Sigmoid colon (tissue), 7 donors: ENCODE measurements at regions of chr1 and their contacts with region 1.

Region 1: DNA sequence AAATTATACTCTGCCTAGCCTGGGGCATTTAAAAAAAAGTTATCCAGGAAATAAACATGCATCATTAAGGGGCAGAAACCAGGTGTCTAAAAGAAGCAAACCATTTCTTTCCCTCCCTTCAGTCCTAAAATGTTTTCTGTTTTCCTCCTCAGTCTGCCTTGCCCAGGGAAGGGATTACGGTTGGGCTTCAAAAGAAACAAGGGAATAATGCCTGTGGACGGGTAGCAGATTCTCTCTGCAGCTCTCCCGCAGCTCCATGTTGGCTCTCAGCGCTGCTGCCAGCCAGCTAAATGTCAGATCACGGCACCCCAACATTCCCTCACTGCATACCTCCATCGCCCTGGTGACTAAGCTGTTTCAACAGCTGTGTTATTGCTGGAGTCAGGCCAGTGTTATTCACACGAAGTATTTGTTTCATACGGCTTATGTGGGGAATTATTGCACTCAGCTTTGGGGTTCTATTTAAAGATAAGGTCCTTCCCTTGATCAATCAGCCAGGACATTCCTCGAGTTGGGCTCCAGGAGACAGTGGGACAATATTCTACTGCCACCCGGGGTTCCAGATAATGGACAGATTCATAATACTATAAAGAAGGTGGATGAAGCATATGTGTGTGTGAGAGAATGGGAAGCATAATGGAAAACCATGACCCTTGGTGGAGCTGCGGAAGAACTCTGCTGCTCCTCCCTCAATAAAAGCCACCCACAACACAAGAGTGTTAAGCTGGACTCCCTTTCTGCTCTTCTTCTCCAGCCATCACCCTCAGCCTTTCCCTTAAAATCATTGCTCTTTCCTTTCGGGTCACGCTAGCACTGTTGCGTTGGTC is 58.2 kb downstream of the WLS start:
- DNase-seq: peak; percentile 86
- H3K4me3 ChIP-seq: peak overlapping the region in 3 of 4 donors; percentile 1 to 18 (median 13)
- H3K27ac ChIP-seq: peak overlapping the region; percentile 71 to 86 (median 80)
- H3K4me1 ChIP-seq: peaks cover 0 to 67% (median 60%) of the 10 kb centered on the region in 4 donors
- H3K27me3 ChIP-seq: no peaks in the 10 kb centered on the region
- CTCF ChIP-seq: no peak
- EP300 ChIP-seq: no peak
- POLR2A ChIP-seq: no peak

Region 2: GRCh38 chr1:68149110-68149798 is 24.9 kb before region 1 on chr1:
- intact Hi-C with region 1: no loop called
- DNase-seq: no peak
- H3K4me3 ChIP-seq: no peak overlapping the region
- H3K27ac ChIP-seq: peak overlapping the region in 2 of 4 donors; percentile 70 to 71
- H3K4me1 ChIP-seq: peaks cover 0 to 22% (median 10%) of the 10 kb centered on the region in 4 donors
- H3K27me3 ChIP-seq: no peaks in the 10 kb centered on the region
- CTCF ChIP-seq: no peak
- EP300 ChIP-seq: no peak
- POLR2A ChIP-seq: no peak

Region 3: DNA sequence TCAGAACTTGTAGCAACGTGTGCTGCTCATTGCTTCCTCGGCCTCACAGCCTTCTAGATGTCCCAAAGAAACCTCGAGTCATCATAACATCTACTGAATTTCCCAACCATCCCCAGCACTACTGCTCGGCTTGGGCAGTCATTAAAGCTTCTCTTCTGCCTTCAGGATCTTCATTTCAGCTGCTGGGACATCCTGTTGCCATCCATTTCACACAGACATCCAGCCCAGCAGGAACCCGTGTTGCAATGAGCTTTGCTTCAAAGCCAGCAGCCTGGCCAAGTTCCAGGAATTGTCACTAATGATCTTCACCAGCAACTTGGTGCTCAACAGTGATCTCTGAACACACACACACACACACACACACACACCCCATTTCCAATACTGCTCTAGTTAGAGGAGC is 39.7 kb after region 1 on chr1:
- intact Hi-C with region 1: loop called (anchors 5 kb)
- DNase-seq: peak; percentile 97
- H3K4me3 ChIP-seq: no peak overlapping the region
- H3K27ac ChIP-seq: peak overlapping the region; percentile 72 to 82 (median 77)
- H3K4me1 ChIP-seq: peaks cover 0 to 100% (median 91%) of the 10 kb centered on the region in 4 donors
- H3K27me3 ChIP-seq: no peaks in the 10 kb centered on the region
- CTCF ChIP-seq: no peak
- EP300 ChIP-seq: peak in 1 of 4 donors; percentile 51
- POLR2A ChIP-seq: no peak